Tibial artery (tissue), 4 donors: ENCODE measurements at regions of chr14 and their contacts with region 1.

Region 1: GRCh38 chr14:85934123-85934885 is 404.4 kb downstream of the FLRT2 start:
- DNase-seq: no peak
- H3K4me3 ChIP-seq: peak overlapping the region; percentile 32 to 34
- H3K27ac ChIP-seq: no peak overlapping the region
- H3K4me1 ChIP-seq: no peaks in the 10 kb centered on the region
- H3K27me3 ChIP-seq: no peaks in the 10 kb centered on the region
- CTCF ChIP-seq: no peak

Region 2: GRCh38 chr14:85788470-85789233 is 145.7 kb before region 1 on chr14:
- intact Hi-C with region 1: no loop called
- DNase-seq: no peak
- H3K4me3 ChIP-seq: no peak overlapping the region
- H3K27ac ChIP-seq: no peak overlapping the region
- H3K4me1 ChIP-seq: no peaks in the 10 kb centered on the region
- H3K27me3 ChIP-seq: no peaks in the 10 kb centered on the region
- CTCF ChIP-seq: no peak

Region 3: GRCh38 chr14:85895603-85896002 is 38.7 kb before region 1 on chr14:
- intact Hi-C with region 1: no loop called
- DNase-seq: no peak
- H3K4me3 ChIP-seq: no peak overlapping the region
- H3K27ac ChIP-seq: no peak overlapping the region
- H3K4me1 ChIP-seq: peaks cover 0 to 6% (median 0%) of the 10 kb centered on the region in 4 donors
- H3K27me3 ChIP-seq: no peaks in the 10 kb centered on the region
- CTCF ChIP-seq: no peak

Region 4: DNA sequence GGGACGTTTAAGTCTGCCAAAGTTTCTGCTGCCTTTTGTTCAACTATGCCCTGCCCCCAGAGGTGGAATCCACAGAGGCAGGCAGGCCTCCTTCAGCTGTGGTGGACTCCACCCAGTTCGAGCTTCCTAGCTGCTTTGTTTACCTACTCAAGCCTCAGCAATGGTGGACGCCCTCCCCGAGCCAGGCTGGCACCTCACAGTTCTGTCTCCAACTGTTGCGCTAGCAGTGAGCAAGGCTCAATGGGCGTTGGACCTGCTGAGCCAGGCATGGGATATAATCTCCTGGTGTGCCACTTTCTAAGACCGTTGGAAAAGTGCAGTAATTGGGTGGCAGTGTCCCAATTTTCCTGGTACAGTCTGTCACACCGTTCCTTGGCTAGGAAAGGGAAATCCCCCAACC is 40.3 kb after region 1 on chr14:
- intact Hi-C with region 1: loop called (anchors 2 kb)
- DNase-seq: no peak
- H3K4me3 ChIP-seq: no peak overlapping the region
- H3K27ac ChIP-seq: no peak overlapping the region
- H3K4me1 ChIP-seq: no peaks in the 10 kb centered on the region
- H3K27me3 ChIP-seq: no peaks in the 10 kb centered on the region
- CTCF ChIP-seq: no peak

Region 5: DNA sequence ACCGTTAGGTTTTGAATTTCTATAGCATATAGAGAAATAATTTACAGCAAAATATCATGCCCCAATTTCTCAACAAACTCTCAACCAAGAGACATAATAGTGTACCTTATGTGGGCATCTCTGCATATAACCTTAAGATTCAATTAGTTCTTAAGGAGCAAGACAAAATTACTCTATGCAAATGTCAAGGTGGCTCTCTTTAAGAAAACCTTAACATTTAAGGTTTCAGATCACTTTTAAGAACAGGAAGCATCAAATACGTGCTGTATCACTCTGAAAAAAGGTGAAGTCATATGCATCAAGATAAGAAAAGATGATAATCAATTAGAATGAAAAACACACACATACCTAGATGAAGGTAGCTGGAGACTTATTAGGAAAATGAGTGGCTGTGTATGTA is 323.7 kb after region 1 on chr14:
- intact Hi-C with region 1: no loop called
- DNase-seq: no peak
- H3K4me3 ChIP-seq: no peak overlapping the region
- H3K27ac ChIP-seq: no peak overlapping the region
- H3K4me1 ChIP-seq: no peaks in the 10 kb centered on the region
- H3K27me3 ChIP-seq: no peaks in the 10 kb centered on the region
- CTCF ChIP-seq: no peak